Activated CD4-positive, alpha-beta T cell treated with anti-CD3 and anti-CD28 coated beads for 36 hours (primary cell): ENCODE measurements at regions of chr10 and their contacts with region 1.

Region 1: DNA sequence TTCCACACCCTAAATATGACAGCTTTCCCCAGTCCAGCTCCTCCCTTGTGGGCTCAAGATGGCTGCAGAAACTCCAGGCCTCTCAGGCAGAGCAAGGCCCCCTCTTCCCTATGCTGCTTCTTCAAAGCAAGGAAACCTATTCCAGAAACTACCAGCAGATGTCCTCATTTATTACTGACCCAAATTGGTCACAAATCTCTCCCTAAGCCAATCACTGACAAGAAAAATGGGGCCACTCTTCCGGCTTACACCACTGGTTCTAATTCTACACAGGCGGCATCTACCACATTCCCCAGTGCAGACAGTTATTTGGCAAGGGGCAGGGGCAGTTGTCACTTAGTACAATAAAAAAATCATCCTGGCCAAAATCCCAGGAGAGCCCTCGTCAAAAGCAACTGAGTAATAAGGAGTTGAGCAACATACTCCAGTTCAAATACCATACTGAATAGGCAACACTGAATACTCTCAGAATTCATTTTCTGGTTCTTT is 150.4 kb downstream of the SFMBT2 start:
- DNase-seq: no peak
- ATAC-seq: peak; percentile 11
- H3K4me3 Mint-ChIP-seq: no peak overlapping the region
- H3K27ac Mint-ChIP-seq: peak overlapping the region; percentile 16
- H3K4me1 Mint-ChIP-seq: peaks cover 58% of the 10 kb centered on the region
- H3K27me3 Mint-ChIP-seq: no peaks in the 10 kb centered on the region

Region 2: GRCh38 chr10:6929148-6929830 is 331.2 kb before region 1 on chr10:
- CTCF ChIA-PET with region 1: no interaction called
- POLR2A ChIA-PET with region 1: no interaction called
- intact Hi-C with region 1: loop called (anchors 5 to 10 kb)
- DNase-seq: no peak
- ATAC-seq: no peak
- H3K4me3 Mint-ChIP-seq: no peak overlapping the region
- H3K27ac Mint-ChIP-seq: peak overlapping the region; percentile 24
- H3K4me1 Mint-ChIP-seq: peaks cover 36% of the 10 kb centered on the region
- H3K27me3 Mint-ChIP-seq: no peaks in the 10 kb centered on the region

Region 3: GRCh38 chr10:7184660-7185366 is 75.6 kb before region 1 on chr10:
- CTCF ChIA-PET with region 1: no interaction called
- POLR2A ChIA-PET with region 1: no interaction called
- intact Hi-C with region 1: loop called (anchors 2 to 5 kb)
- DNase-seq: no peak
- ATAC-seq: peak; percentile 6
- H3K4me3 Mint-ChIP-seq: peak overlapping the region; percentile 2
- H3K27ac Mint-ChIP-seq: peak overlapping the region; percentile 89
- H3K4me1 Mint-ChIP-seq: peaks cover 69% of the 10 kb centered on the region
- H3K27me3 Mint-ChIP-seq: no peaks in the 10 kb centered on the region

Region 4: GRCh38 chr10:7239312-7239985 is 21.0 kb before region 1 on chr10:
- CTCF ChIA-PET with region 1: interaction called, 3 read pairs
- POLR2A ChIA-PET with region 1: no interaction called
- intact Hi-C with region 1: loop called (anchors 1 to 2 kb)
- DNase-seq: peak; percentile 60
- ATAC-seq: peak; percentile 92
- H3K4me3 Mint-ChIP-seq: no peak overlapping the region
- H3K27ac Mint-ChIP-seq: peak overlapping the region; percentile 26
- H3K4me1 Mint-ChIP-seq: peaks cover 34% of the 10 kb centered on the region
- H3K27me3 Mint-ChIP-seq: peaks cover 3% of the 10 kb centered on the region

Region 5: GRCh38 chr10:7410862-7411670 is 150.6 kb after region 1 on chr10 and contains the start of gene SFMBT2:
- CTCF ChIA-PET with region 1: interaction called, 5 read pairs
- POLR2A ChIA-PET with region 1: interaction called, 3 read pairs
- intact Hi-C with region 1: loop called (anchors 1 to 2 kb)
- DNase-seq: peak; percentile 80
- ATAC-seq: peak; percentile 42
- H3K4me3 Mint-ChIP-seq: peak within 1 kb of the TSS; percentile 94
- H3K27ac Mint-ChIP-seq: peak within 1 kb of the TSS; percentile 93
- H3K4me1 Mint-ChIP-seq: peaks cover 40% of the 10 kb centered on the region
- H3K27me3 Mint-ChIP-seq: peaks cover 10% of the 10 kb centered on the region
- total RNA-seq, gene SFMBT2: 17.6 to 18.0 TPM